ENCODE measurements at regions of chr4 and their contacts with region 1.

Region 1: DNA sequence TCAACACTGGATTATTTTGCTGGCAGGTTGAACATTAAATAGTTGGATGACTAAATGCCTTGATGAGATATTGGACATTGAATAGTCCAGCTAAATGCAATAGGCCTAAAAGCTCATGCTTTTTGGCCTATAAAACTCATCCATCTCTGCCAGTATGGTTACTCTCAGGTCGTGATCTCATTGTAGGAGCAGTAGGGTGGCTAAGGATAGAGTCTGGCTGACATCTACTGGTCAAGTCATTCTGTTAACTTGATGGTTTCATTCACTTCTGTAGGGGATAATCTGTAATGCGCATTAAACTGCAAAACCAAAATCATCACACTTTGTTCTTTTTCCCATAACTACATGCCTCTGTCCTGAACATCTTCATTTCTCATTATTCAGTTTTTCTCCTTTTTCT is 227.0 kb downstream of the DKK2 start:
- DNase-seq: no peak
- H3K4me3 Mint-ChIP-seq: no peak overlapping the region
- H3K27ac Mint-ChIP-seq: no peak overlapping the region
- H3K4me1 Mint-ChIP-seq: no peaks in the 10 kb centered on the region
- H3K27me3 Mint-ChIP-seq: no peaks in the 10 kb centered on the region

Region 2: DNA sequence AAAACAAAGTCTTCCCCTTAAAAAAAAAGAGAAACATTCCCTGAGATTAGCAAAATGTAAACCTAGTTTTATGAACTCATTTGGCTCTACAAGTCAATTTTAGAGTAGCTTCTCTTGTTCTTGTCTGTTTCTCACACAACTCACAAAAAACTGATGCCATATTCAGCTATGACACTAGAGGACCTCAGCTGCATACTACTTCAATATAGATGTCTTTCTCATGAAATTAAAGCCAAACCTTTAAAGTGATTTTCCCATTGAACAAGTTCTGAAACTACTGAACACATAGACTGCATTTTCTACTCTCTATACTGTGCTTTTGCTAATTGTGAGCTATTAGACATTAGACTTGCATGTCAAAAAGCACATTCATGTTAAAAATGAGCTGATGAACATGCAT is 542.9 kb before region 1 on chr4:
- intact Hi-C with region 1: loop called (anchors 5 kb)
- DNase-seq: no peak
- H3K4me3 Mint-ChIP-seq: no peak overlapping the region
- H3K27ac Mint-ChIP-seq: no peak overlapping the region
- H3K4me1 Mint-ChIP-seq: no peaks in the 10 kb centered on the region
- H3K27me3 Mint-ChIP-seq: no peaks in the 10 kb centered on the region